Activated naive CD8-positive, alpha-beta T cell treated with anti-CD3 and anti-CD28 coated beads, Interleukin-2, amount 10 ng/mL, durations not matched to agents 7 days and 5 days (primary cell): ENCODE measurements at regions of chr1 and their contacts with region 1.

Region 1: GRCh38 chr1:150515328-150516048 is at the start of gene FALEC:
- DNase-seq: peak; percentile 95
- ATAC-seq: peak; percentile 99
- H3K4me3 Mint-ChIP-seq: peak within 1 kb of the TSS; percentile 89
- H3K27ac Mint-ChIP-seq: peak within 1 kb of the TSS; percentile 75
- H3K4me1 Mint-ChIP-seq: peaks cover 12% of the 10 kb centered on the region
- H3K27me3 Mint-ChIP-seq: peaks cover 3% of the 10 kb centered on the region
- total RNA-seq, gene FALEC: 0.58 to 0.60 TPM

Region 2: DNA sequence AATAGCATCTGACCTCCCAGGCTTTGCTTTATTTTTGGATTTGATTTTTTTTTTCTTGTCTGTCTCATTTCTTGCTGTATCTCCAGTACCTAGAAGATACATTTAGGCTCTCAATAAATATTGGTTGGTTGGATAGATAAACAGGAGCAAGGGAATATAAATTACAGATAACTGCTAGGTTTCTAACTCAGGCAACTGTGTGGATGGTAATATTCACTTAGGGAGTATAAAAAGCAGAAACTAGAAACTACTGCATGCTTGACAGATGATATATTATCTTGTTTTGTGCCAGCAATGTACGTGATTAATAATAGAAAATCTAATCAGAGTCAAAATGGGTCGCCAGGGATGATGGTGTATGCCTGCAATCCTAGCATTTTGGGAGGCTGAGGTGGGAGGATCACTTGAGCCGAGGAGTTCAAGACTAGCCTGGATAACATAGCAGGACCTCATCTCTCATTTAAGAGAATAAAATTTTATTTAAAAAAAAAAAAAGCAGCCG is 59.3 kb before region 1 on chr1:
- POLR2A ChIA-PET with region 1: no interaction called
- DNase-seq: no peak
- ATAC-seq: no peak
- H3K4me3 Mint-ChIP-seq: no peak overlapping the region
- H3K27ac Mint-ChIP-seq: no peak overlapping the region
- H3K4me1 Mint-ChIP-seq: peaks cover 2% of the 10 kb centered on the region
- H3K27me3 Mint-ChIP-seq: no peaks in the 10 kb centered on the region

Region 3: GRCh38 chr1:150486964-150487762 is 28.3 kb before region 1 on chr1 and contains the start of gene TARS2:
- POLR2A ChIA-PET with region 1: interaction called, 20 read pairs
- DNase-seq: peak; percentile 84
- ATAC-seq: peak; percentile 100
- H3K4me3 Mint-ChIP-seq: peak within 1 kb of the TSS; percentile 96
- H3K27ac Mint-ChIP-seq: peak within 1 kb of the TSS; percentile 96
- H3K4me1 Mint-ChIP-seq: peaks cover 11% of the 10 kb centered on the region
- H3K27me3 Mint-ChIP-seq: no peaks in the 10 kb centered on the region
- total RNA-seq, gene TARS2: 41.6 to 42.9 TPM